Activated CD4-positive, alpha-beta T cell treated with anti-CD3 and anti-CD28 coated beads for 36 hours (primary cell): ENCODE measurements at regions of chr13 and their contacts with region 1.

Region 1: GRCh38 chr13:95624020-95624419 is 20.5 kb downstream of the DZIP1 start:
- DNase-seq: peak; percentile 32
- ATAC-seq: peak; percentile 49
- H3K4me3 Mint-ChIP-seq: no peak overlapping the region
- H3K27ac Mint-ChIP-seq: no peak overlapping the region
- H3K4me1 Mint-ChIP-seq: no peaks in the 10 kb centered on the region
- H3K27me3 Mint-ChIP-seq: peaks cover 9% of the 10 kb centered on the region

Region 2: GRCh38 chr13:95367309-95367843 is 256.6 kb before region 1 on chr13:
- CTCF ChIA-PET with region 1: no interaction called
- POLR2A ChIA-PET with region 1: no interaction called
- intact Hi-C with region 1: no loop called
- DNase-seq: no peak
- ATAC-seq: no peak
- H3K4me3 Mint-ChIP-seq: no peak overlapping the region
- H3K27ac Mint-ChIP-seq: no peak overlapping the region
- H3K4me1 Mint-ChIP-seq: peaks cover 5% of the 10 kb centered on the region
- H3K27me3 Mint-ChIP-seq: peaks cover 4% of the 10 kb centered on the region

Region 3: GRCh38 chr13:95608640-95609280 is 15.3 kb before region 1 on chr13:
- CTCF ChIA-PET with region 1: interaction called, 16 read pairs
- POLR2A ChIA-PET with region 1: interaction called, 3 read pairs
- intact Hi-C with region 1: no loop called
- DNase-seq: no peak
- ATAC-seq: no peak
- H3K4me3 Mint-ChIP-seq: no peak overlapping the region
- H3K27ac Mint-ChIP-seq: no peak overlapping the region
- H3K4me1 Mint-ChIP-seq: no peaks in the 10 kb centered on the region
- H3K27me3 Mint-ChIP-seq: peaks cover 8% of the 10 kb centered on the region

Region 4: GRCh38 chr13:95982144-95982543 is 358.1 kb after region 1 on chr13:
- CTCF ChIA-PET with region 1: no interaction called
- POLR2A ChIA-PET with region 1: no interaction called
- intact Hi-C with region 1: loop called in 1 of 2 experiments (anchors 1 kb)
- DNase-seq: no peak
- ATAC-seq: no peak
- H3K4me3 Mint-ChIP-seq: no peak overlapping the region
- H3K27ac Mint-ChIP-seq: no peak overlapping the region
- H3K4me1 Mint-ChIP-seq: no peaks in the 10 kb centered on the region
- H3K27me3 Mint-ChIP-seq: no peaks in the 10 kb centered on the region